Heart left ventricle (tissue), 16 donors: ENCODE measurements at regions of chr20 and their contacts with region 1.

Region 1: DNA sequence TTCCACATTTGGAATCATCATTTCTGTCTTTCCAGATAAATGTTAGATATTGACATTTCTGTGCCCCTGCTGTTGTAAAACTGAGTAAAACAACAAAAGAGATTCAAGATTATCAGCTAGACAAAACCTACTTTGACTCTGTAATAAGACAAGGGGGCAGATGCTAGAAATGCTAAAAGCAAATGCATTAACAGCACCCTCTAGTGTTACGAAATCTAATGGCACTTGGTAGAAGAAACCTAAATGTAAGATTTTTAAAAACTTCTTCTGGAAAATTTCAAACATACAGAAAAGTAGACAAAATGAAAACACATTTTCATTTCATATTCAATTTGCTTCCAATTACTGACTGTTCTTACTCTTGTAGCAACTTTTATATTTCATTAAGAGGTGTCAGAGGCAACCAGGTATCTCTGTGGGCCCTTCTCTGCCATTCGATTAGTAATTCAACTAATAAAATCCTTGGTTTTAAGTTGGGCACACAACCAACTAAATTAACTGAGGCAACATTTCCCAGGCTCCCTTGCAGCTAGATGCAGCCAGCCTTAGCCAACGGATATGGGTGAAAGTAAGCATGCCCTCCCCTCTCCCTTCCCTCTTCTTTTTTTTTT is 45.0 kb downstream of the SLC23A2 start:
- DNase-seq: no peak
- ATAC-seq: no peak
- H3K4me3 ChIP-seq: no peak overlapping the region
- H3K27ac ChIP-seq: no peak overlapping the region
- H3K4me1 ChIP-seq: peaks cover 0 to 16% (median 1%) of the 10 kb centered on the region in 12 donors
- H3K27me3 ChIP-seq: no peaks in the 10 kb centered on the region
- CTCF ChIP-seq: peak; percentile 73 to 89 (median 83)
- POLR2A ChIP-seq: no peak

Region 2: GRCh38 chr20:4607287-4607713 is 349.0 kb before region 1 on chr20:
- intact Hi-C with region 1: loop called in 5 of 10 experiments (anchors 5 to 10 kb)
- DNase-seq: peak in 3 of 5 donors; percentile 39 to 44 (median 41)
- ATAC-seq: peak; percentile 69 to 78 (median 76)
- H3K4me3 ChIP-seq: no peak overlapping the region
- H3K27ac ChIP-seq: no peak overlapping the region
- H3K4me1 ChIP-seq: peaks cover 0 to 7% (median 0%) of the 10 kb centered on the region in 12 donors
- H3K27me3 ChIP-seq: peaks cover 0 to 12% (median 0%) of the 10 kb centered on the region in 9 donors
- CTCF ChIP-seq: peak; percentile 88 to 98 (median 94)
- POLR2A ChIP-seq: no peak

Region 3: GRCh38 chr20:4869290-4870193 is 86.8 kb before region 1 on chr20:
- intact Hi-C with region 1: loop called in 1 of 10 experiments (anchors 10 kb)
- DNase-seq: no peak
- ATAC-seq: peak in 1 of 4 donors; percentile 74
- H3K4me3 ChIP-seq: no peak overlapping the region
- H3K27ac ChIP-seq: no peak overlapping the region
- H3K4me1 ChIP-seq: no peaks in the 10 kb centered on the region
- H3K27me3 ChIP-seq: no peaks in the 10 kb centered on the region
- CTCF ChIP-seq: no peak
- POLR2A ChIP-seq: no peak